Right lobe of liver (tissue), 6 donors: ENCODE measurements at regions of chr3 and their contacts with region 1.

Region 1: GRCh38 chr3:99833617-99834205 is 16.0 kb downstream of the CMSS1 start:
- DNase-seq: no peak
- ATAC-seq: no peak
- H3K4me3 ChIP-seq: no peak overlapping the region
- H3K27ac ChIP-seq: no peak overlapping the region
- H3K4me1 ChIP-seq: no peaks in the 10 kb centered on the region
- H3K27me3 ChIP-seq: no peaks in the 10 kb centered on the region
- CTCF ChIP-seq: no peak
- POLR2A ChIP-seq: no peak

Region 2: DNA sequence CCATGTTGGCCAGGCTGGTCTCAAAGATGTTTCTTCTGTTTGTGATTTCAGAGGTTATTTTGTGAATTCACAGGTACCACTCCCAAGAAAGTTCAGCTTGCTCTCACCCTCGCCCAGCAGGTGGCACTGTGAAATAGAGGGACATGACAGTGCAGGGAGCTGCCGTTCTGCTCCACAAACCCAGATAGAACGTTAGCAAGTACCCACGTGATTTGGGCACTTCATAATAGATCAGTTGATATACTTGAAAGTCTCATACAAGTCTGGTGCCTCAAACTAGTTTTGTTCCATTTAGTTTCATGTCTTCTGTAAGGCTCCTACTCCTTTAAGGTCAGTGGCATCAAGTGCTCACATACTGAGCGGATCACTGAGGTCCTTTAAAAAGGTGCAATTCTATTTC is 235.1 kb after region 1 on chr3:
- intact Hi-C with region 1: loop called in 1 of 2 experiments (anchors 10 kb)
- DNase-seq: peak; percentile 81 to 85 (median 84)
- ATAC-seq: peak; percentile 95 to 99 (median 98)
- H3K4me3 ChIP-seq: no peak overlapping the region
- H3K27ac ChIP-seq: no peak overlapping the region
- H3K4me1 ChIP-seq: peaks cover 0 to 2% (median 0%) of the 10 kb centered on the region in 4 donors
- H3K27me3 ChIP-seq: no peaks in the 10 kb centered on the region
- CTCF ChIP-seq: peak; percentile 76 to 84 (median 79)
- POLR2A ChIP-seq: no peak

Region 3: DNA sequence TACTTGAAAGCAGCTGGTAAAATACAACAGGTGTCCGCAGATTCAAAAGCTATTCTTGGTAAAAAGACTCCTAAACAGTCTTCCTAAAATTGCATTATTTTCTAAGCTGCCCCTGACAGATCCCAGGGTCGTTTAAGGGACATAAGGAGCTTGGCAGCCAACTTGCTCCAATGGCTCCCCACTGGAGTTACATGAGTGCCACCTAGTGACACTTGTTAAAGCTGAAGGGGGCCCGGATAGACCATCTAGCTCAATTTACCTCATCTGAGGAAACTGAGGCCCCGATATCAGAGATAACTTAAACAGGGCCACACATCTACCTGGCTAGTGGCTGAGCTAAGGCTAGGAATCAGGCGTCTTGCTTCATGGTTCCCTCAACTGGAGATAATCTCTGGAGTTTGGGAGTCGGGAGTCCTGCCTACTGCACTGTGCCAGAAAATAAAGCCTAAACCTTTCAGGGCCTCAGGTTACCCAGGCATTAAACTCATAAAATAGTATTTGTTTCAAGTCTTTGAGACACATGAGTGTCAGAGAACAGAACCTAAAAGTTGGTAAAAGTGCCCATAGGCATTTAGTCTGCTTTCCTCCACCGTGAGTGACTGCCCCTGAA is 420.6 kb after region 1 on chr3:
- intact Hi-C with region 1: loop called (anchors 5 to 10 kb)
- DNase-seq: peak in 1 of 3 donors; percentile 52
- ATAC-seq: peak; percentile 91 to 97 (median 94)
- H3K4me3 ChIP-seq: no peak overlapping the region
- H3K27ac ChIP-seq: no peak overlapping the region
- H3K4me1 ChIP-seq: peaks cover 0 to 9% (median 0%) of the 10 kb centered on the region in 4 donors
- H3K27me3 ChIP-seq: no peaks in the 10 kb centered on the region
- CTCF ChIP-seq: peak; percentile 65 to 75 (median 74)
- POLR2A ChIP-seq: no peak